ENCODE measurements at regions of chr20 and their contacts with region 1.

Region 1: GRCh38 chr20:53594068-53595017 is 704 bp upstream of the ZNF217 start:
- DNase-seq: no peak
- ATAC-seq: peak; percentile 82
- H3K4me3 ChIP-seq: peak overlapping the region; percentile 66 to 67
- H3K27ac ChIP-seq: peak overlapping the region; percentile 98
- H3K4me1 ChIP-seq: peaks cover 18% of the 10 kb centered on the region
- H3K27me3 ChIP-seq: no peaks in the 10 kb centered on the region
- CTCF ChIP-seq: peak; percentile 83

Region 2: GRCh38 chr20:53623454-53624211 is 29.3 kb after region 1 on chr20:
- CTCF ChIA-PET with region 1: interaction called, 7 read pairs
- POLR2A ChIA-PET with region 1: interaction called, 14 read pairs
- in situ Hi-C with region 1: no loop called
- intact Hi-C with region 1: loop called (anchors 1 kb)
- DNase-seq: peak; percentile 87
- ATAC-seq: peak; percentile 75
- H3K4me3 ChIP-seq: peak overlapping the region; percentile 6 to 49
- H3K27ac ChIP-seq: peak overlapping the region; percentile 100
- H3K4me1 ChIP-seq: peaks cover 47% of the 10 kb centered on the region
- H3K27me3 ChIP-seq: no peaks in the 10 kb centered on the region
- CTCF ChIP-seq: no peak

Region 3: DNA sequence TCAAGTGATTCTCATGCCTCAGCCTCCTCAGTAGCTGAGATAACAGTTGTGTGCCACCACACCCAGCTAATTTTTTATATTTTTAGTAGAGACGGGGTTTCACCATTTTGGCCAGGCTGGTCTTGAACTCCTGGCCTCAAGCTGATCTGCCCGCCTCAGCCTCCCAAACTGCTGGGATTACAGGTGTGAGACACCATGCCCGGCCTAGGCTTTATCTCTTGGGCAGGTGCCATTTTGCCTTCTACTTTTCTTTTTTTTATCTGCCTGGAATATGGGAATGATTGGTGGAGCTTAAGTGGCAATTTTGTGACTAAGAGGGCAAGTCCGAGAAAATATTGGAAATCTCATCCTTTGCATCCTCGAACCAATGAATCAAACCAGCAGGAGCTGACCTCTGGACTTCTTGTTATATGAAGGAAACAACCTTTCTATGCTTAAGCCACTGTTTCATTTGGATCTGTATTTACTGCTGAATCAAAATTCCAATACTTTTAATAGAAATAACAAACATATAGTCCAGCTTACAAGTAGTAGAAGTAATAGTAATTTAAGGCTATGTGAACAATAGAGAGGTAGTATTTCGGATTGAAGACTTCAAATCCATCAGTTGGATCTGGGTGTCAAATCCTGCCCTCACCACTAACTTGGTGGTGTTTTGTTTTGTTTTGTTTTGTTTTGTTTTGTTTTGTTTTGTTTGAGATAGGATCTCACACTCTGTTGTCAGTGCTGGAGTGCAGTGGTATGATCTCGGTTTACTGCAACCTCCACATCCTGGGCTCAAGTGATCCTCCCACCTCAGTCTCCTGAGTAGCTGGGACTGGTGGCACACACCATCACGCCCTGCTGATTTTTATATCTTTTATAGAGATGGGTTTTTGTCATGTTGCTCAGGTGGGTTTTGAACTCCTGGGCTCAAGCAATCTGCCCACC is 128.4 kb after region 1 on chr20:
- CTCF ChIA-PET with region 1: no interaction called
- POLR2A ChIA-PET with region 1: interaction called, 13 read pairs
- in situ Hi-C with region 1: no loop called
- intact Hi-C with region 1: no loop called
- DNase-seq: no peak
- ATAC-seq: peak; percentile 66
- H3K4me3 ChIP-seq: no peak overlapping the region
- H3K27ac ChIP-seq: peak overlapping the region; percentile 77
- H3K4me1 ChIP-seq: peaks cover 8% of the 10 kb centered on the region
- H3K27me3 ChIP-seq: no peaks in the 10 kb centered on the region
- CTCF ChIP-seq: no peak

Region 4: DNA sequence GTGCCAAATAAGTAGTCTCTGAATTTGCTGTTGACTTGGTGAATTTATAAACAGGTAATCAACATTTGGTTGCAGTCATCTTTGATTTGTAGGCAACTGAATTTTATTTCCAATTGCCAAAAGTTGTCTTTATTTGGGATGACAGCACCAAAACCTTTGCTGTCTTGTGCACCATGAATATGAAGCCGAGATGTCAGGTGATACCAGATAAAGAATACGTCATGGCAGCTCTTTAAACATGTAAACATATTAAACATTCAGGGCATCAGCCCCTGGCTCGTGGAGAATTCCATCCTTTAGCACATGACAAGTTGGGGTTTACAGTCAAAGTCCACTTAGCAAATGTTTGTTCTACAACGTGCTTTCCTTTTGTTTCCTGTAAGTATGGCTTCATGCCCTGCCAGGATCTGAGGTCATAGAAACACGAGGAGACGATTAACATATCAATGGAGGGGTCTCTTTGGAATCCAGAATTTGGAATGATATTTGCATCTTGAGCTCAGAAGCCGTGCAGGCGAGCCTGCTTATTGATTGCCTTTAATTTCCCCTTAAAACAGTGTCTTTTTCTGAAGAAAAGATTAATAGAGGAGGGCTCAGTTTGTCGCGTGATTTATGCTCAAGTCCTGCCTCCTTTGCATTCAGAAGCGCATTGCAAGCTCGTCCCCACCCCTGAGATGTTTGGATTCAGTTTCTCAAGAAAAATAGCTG is 169.5 kb after region 1 on chr20:
- CTCF ChIA-PET with region 1: no interaction called
- POLR2A ChIA-PET with region 1: interaction called, 10 read pairs
- in situ Hi-C with region 1: no loop called
- intact Hi-C with region 1: no loop called
- DNase-seq: peak; percentile 70
- ATAC-seq: peak; percentile 74
- H3K4me3 ChIP-seq: peak overlapping the region in 1 of 2 experiments; percentile 36; a peak in 2 of 4 replicates
- H3K27ac ChIP-seq: peak overlapping the region; percentile 100
- H3K4me1 ChIP-seq: peaks cover 33% of the 10 kb centered on the region
- H3K27me3 ChIP-seq: no peaks in the 10 kb centered on the region
- CTCF ChIP-seq: no peak

Region 5: DNA sequence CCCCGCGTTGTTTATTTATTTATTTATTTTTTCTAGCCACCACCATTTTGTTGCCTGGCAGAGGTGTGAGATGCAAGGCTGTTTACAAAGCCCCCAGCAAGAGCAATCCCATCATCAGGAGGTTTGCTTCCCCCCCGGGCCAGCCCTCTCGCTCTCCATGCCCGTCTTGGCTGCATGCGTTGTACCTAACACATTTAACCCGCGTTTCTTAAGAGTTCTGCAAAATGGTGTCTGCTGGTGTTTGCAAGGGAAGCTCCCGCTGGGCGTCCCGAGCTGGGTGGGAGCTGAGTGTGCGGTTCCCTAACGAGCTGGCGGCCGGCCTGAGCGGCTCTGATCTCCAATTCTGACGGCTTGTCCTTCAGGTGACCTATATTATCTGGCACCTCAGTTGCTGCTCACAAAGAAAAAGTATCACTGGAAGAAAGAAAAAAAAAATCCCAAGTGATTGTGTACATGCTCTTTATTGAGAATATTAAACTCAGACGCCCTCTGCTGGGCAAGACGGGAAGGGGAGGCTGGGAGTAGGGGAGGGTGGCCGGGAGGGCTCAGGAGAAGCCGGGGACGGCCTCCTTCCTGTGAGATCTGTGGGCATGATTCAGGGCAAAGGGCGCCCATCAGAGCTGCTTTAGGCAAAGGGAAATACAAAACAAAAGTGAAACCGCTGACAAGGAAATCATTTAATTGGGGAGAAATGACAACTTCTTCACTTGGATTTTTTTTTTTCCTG is 321.3 kb after region 1 on chr20:
- CTCF ChIA-PET with region 1: no interaction called
- POLR2A ChIA-PET with region 1: interaction called, 6 read pairs
- in situ Hi-C with region 1: no loop called
- intact Hi-C with region 1: loop called (anchors 10 kb)
- DNase-seq: peak; percentile 95
- ATAC-seq: peak; percentile 88
- H3K4me3 ChIP-seq: peak overlapping the region; percentile 26 to 63
- H3K27ac ChIP-seq: peak overlapping the region; percentile 100
- H3K4me1 ChIP-seq: peaks cover 60% of the 10 kb centered on the region
- H3K27me3 ChIP-seq: no peaks in the 10 kb centered on the region
- CTCF ChIP-seq: peak; percentile 92

Region 6: DNA sequence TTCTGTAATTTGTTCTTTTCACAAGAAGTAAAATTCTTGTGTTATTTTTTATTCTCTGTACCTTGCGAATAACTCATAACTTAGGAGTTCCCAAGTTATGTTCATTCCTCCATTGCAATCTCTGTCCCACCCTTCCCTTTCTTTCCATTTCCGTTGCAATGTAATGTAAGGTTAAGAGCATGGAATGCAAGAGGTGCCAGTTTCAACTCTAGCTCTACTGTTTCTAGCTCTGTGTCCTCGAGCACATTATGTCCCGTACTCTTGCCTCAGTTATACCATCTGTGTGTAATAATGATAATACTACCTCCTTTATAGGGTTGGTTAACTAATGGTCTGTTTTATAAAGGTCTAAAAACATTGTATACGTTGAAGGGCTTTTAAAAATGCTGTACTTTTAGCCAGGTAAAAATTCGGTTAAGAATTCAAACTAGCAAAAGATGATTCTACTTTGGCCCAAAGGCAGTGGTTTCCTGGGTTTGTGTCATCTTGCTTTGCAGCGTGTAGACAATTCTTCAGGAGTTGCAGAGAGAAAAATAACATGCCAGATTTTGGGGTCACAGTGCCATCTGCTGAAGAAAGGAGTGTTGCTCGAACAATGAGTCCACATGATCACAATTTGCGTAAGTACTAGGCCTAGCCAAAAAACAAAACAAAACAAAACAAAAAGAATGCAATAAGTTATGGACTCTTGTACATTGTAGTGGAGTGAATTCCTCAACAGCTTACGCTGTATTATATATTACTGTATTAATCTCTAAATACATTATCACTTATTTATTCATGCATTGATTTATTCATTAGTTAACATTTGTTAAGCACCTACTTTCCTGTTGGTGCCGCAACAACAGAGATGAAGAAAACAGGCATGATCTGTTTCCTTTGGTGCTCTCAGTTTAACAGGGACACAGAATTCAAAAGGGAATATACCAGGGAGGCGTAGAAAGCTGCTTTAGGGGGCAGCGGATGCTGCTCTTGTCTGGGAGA is 603.6 kb after region 1 on chr20:
- CTCF ChIA-PET with region 1: no interaction called
- POLR2A ChIA-PET with region 1: no interaction called
- in situ Hi-C with region 1: no loop called
- intact Hi-C with region 1: no loop called
- DNase-seq: no peak
- ATAC-seq: peak; percentile 61; the same call in 1 of the 2 replicates
- H3K4me3 ChIP-seq: no peak overlapping the region
- H3K27ac ChIP-seq: peak overlapping the region; percentile 77
- H3K4me1 ChIP-seq: peaks cover 11% of the 10 kb centered on the region
- H3K27me3 ChIP-seq: no peaks in the 10 kb centered on the region
- CTCF ChIP-seq: peak; percentile 66